ENCODE measurements at regions of chr5 and their contacts with region 1.

Region 1: GRCh38 chr5:149141224-149141956 is at the start of gene ABLIM3:
- DNase-seq: peak; percentile 45 to 88 (median 62)
- H3K4me3 ChIP-seq: peak within 1 kb of the TSS; percentile 66 to 99 (median 82)
- H3K27ac ChIP-seq: peak within 1 kb of the TSS in 58 of 59 donors; percentile 3 to 93 (median 82)
- H3K27me3 ChIP-seq: no peaks in the 10 kb centered on the region
- CTCF ChIP-seq: peak; percentile 45 to 98 (median 93)
- total RNA-seq, gene ABLIM3: 26.3 to 60.7 (median 40.9) TPM

Region 2: DNA sequence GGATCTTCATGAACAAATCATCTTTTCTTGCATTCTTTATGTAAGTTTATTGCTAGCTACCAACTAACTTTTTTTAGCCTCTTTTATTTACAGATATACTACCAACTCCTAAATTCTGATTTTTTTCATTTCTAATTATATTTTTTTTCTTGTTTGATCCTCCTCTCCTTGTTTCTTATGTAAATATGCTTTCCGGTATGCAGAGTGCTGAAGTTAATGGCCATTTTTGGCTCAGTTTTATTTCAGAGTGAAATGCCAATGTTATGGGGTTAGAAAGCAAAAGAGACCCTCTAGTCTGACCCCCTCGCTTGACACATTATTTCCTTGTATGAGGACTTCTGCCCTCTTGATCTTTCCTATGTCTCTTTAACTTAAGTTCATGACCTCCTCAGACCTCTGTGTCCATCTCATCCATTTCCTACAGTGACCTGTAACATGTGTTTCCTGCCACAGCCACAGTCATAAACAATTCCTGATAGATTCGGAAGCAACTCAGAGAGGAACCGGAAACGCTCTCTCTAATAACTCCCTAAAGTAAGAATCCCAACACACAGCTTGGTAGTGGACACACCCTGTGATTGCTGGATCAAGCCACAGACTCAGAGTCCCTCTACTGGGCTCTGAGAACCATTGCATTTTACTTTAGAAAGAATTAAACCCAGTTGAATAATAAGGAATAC is 87.4 kb after region 1 on chr5:
- intact Hi-C with region 1: loop called (anchors 2 to 5 kb)
- DNase-seq: peak in 2 of 10 donors; percentile 40 to 51
- H3K4me3 ChIP-seq: no peak overlapping the region
- H3K27ac ChIP-seq: peak overlapping the region in 6 of 59 donors; percentile 8 to 68 (median 26)
- H3K27me3 ChIP-seq: no peaks in the 10 kb centered on the region
- CTCF ChIP-seq: peak; percentile 53 to 81 (median 71)

Region 3: DNA sequence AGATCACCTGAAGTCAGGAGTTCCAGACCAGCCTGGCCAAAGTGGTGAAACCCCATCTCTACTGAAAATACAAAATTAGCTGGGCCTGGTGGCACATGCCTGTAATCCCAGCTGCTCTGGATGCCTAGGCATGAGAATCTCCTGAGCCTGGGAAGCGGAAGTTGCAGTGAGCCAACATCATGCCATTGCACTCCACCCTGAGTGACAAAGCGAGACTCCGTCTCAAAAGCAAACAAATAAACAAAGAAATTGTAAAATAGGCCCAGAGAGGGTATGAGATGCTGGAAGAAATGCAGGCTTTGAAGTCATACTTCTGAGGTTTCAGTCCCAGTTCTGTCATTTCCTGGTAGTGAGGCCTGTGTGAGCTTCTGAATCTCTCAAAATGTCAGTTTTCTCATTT is 434.6 kb after region 1 on chr5:
- intact Hi-C with region 1: loop called in 1 of 2 experiments (anchors 10 kb)
- DNase-seq: no peak
- H3K4me3 ChIP-seq: no peak overlapping the region
- H3K27ac ChIP-seq: peak overlapping the region in 1 of 59 donors; percentile 44
- H3K27me3 ChIP-seq: no peaks in the 10 kb centered on the region
- CTCF ChIP-seq: no peak